ENCODE measurements at regions of chr11 and their contacts with region 1.

Region 1: DNA sequence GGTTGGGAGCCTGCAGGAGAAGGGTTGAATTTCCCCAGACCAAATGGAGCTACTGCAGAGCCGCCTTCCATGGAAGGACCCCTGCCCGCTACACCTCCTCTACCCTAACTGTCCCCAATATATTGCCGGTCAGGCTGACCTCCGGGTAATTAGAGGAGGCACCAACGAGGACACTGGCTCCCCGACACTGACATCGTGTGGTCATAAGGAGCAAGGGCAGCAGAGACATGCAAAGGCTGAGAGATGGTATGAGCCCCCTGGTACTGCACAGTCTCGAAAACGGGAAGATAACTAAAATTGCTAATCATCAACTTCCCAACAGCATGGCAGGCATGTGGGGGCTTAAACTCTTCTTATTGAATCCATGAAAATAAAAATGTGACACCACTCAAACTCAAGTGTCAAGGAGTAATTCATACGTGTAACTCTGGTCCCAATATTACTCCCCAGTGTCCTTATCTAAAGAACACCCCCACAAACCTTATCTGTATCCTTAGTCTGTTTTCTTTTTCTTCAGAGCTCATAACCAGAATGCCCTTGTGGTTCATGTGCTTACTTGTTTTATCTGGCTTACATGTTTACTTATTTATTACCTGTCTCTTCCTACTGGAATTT is 4.4 kb downstream of the CAVIN3 start:
- DNase-seq: peak in 9 of 10 donors; percentile 34 to 90 (median 49)

Region 2: DNA sequence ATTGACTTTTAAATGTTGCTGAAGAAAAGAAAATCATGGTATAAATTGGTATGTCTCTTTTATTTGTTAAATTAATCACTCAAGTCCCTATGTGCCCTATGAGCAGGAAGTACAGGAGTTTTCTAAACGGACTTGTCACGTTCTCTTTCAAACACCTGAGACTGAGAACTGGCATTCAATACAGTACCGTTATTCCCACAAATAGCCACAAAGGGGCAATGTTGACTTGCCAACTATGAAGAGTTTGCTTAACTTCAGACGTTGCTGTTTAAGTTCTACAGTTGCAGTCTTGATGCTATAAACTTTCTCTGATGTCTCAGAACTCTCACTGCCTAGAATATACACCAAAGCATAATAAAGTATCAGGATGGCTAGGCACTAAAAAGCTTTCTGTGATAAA is 293.0 kb before region 1 on chr11:
- intact Hi-C with region 1: loop called (anchors 5 kb)
- DNase-seq: no peak

Region 3: GRCh38 chr11:6251120-6251733 is 64.7 kb before region 1 on chr11:
- intact Hi-C with region 1: loop called (anchors 5 kb)
- DNase-seq: peak in 9 of 10 donors; percentile 33 to 92 (median 63)

Region 4: GRCh38 chr11:6523253-6523652 is 207.3 kb after region 1 on chr11:
- intact Hi-C with region 1: no loop called
- DNase-seq: no peak

Measured in posterior cingulate gyrus (tissue), 11 donors.